GM10248 (cell line): ENCODE measurements at regions of chr6 and their contacts with region 1.

Region 1: GRCh38 chr6:25179051-25179778 is 100.0 kb upstream of the CARMIL1 start:
- DNase-seq: no peak
- CTCF ChIP-seq: no peak

Region 2: DNA sequence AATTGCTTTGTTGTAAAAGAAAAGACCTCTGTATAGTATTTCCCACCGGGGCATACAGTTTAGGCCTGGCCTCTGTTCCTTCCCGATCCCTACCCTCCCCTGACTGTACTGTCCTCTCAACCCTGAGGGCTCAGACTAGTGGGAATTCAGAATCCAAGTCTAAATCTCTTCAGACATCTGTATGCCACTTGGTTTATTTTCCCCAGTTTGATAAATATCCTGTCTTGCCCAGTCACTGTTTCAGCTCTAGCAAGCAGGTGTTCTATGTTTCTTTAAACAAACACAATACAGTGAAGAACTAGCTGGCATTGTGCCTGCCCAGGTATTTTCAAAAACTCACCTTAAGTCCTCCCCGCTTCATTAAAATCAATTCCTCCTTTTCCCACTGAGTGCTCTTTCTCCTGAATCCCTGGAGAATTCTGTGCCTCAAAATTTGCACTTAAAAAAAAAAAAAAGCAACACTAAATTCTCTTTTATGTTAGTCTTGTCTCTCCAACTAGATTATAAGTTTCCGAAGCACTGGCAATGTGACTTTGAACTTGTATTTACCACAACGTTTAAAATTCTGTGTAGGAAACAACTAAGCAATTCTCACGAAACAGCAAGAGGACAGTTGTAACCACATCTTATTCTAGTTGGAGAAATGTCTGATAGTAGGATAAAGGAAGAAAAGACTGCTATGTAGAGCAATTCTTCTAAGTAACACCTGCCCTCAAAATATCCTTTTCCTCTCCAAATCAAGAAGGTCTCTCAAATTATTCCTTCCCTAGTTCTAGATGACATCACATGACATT is 12.1 kb before region 1 on chr6:
- CTCF ChIA-PET with region 1: interaction called, 10 read pairs
- POLR2A ChIA-PET with region 1: no interaction called
- DNase-seq: no peak
- CTCF ChIP-seq: no peak